Activated CD4-positive, alpha-beta memory T cell treated with anti-CD3 and anti-CD28 coated beads, Interleukin-2, amount 10 ng/mL, durations not matched to agents 7 days and 5 days (primary cell): ENCODE measurements at regions of chr14 and their contacts with region 1.

Region 1: DNA sequence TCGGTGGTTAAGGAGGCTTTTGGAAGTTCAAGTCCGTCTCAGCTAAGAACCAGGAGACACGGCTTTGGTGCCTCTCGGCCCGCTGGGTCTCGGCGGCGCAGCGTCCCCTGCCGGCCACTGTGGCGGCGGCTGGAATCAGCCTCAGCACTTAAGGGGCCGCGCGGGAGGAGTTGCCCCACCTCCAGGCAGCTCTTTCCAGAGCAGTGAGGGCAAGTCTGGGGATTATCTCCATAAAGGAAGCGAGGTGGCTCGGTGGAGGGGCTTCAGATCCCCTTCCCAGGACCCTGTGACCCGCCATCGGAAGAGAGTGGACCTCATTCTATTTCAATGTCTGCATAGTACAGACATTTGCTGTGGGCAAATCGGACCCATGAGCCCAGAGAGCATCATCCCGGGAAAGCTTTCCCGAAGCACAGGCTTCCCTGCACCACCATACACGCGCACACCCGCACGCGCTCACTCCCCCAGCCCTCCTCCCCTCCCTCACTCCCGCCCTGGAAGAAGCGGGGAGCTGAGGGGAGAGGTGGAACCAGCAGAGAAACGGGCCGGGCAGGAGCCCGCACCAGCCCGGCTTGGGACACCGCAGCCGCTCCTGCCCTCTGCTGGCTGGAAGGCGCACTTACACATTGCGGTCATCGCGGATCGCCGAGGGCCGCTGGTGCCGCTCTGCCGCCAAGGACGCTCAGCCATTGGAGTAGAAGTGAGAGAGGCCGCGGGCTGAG is 15.9 kb downstream of the RNASE2 start:
- DNase-seq: peak; percentile 82
- H3K4me3 Mint-ChIP-seq: peak overlapping the region; percentile 81
- H3K27ac Mint-ChIP-seq: no peak overlapping the region
- H3K4me1 Mint-ChIP-seq: peaks cover 9% of the 10 kb centered on the region
- H3K27me3 Mint-ChIP-seq: peaks cover 41% of the 10 kb centered on the region

Region 2: DNA sequence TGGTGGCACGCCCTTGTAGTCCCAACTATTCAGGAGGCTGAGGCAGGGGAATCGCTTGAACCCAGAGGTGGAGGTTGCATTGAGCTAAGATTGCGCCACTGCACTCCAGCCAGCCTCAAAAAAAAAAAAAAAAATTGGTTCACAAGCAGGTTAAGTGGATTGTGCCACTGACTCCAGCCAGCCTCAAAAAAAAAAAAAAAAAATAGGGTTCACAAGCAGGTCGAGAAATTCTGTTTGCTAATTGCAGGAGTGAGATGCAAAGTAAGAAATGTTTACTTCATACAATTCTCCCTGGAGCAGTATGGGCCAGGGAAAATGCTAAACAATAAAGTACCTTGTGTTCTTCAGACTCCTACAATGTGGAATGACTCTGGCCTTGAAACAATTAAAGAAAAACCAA is 196.8 kb before region 1 on chr14:
- CTCF ChIA-PET with region 1: no interaction called
- POLR2A ChIA-PET with region 1: no interaction called
- DNase-seq: no peak
- H3K4me3 Mint-ChIP-seq: no peak overlapping the region
- H3K27ac Mint-ChIP-seq: no peak overlapping the region
- H3K4me1 Mint-ChIP-seq: no peaks in the 10 kb centered on the region
- H3K27me3 Mint-ChIP-seq: peaks cover 6% of the 10 kb centered on the region

Region 3: DNA sequence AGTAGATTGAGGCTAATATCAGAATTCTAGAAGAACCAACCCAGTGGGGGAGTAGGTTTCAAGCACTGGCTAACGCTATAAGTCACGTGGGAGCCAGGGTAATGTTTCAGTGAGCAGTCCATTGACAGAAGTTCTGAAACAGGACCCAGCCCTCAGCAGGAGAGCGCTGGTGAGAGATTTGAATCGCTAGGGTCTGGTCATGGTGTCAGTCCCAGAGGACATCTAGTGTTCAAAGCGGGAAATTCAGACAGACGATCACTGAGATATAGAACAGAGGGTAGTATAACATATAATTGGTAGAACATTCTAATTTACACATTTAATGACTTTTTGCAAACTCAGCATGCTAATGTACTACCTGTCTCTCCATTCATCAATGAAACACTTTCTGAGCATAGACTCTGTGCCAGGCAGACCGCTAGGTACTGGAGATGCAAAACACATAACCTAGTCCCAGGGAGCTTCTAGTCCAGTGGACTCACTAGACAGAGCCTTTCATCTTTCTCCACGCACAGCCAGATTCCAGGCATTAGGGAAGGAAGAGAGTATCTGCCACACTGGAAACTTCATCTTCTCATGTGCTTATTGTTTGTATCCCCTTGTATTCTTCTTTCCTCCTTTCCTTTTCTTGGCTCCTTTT is 115.4 kb before region 1 on chr14:
- CTCF ChIA-PET with region 1: interaction called, 73 read pairs
- POLR2A ChIA-PET with region 1: interaction called, 7 read pairs
- DNase-seq: peak; percentile 58
- H3K4me3 Mint-ChIP-seq: no peak overlapping the region
- H3K27ac Mint-ChIP-seq: no peak overlapping the region
- H3K4me1 Mint-ChIP-seq: no peaks in the 10 kb centered on the region
- H3K27me3 Mint-ChIP-seq: peaks cover 22% of the 10 kb centered on the region

Region 4: DNA sequence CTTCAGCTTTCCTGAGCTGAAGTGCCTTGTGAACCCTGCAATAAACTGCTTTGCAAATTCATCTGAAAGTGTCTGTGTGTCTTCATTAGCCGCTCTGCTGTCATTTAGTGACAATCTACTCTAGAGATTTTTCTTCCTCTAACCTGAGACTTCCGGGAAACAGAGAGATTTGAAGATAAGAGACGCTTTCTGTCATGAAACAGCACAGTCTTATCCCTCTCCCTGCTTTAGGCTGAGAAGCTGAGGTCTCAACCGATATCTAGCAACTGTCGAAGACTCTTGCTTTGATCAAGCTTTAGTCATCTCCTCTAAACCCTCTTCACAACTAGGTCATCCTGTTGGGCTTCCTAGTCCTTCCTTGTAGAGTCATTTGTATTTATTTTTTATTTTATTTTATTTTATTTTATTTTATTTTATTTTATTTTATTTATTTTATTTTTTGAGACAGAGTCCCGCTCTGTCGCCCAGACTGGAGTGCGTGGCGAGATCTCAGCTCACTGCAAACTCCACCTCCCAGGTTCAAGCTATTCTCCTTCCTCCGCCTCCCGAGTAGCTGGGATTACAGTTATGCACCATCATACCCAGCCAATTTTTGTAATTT is 14.7 kb before region 1 on chr14:
- CTCF ChIA-PET with region 1: interaction called, 79 read pairs
- POLR2A ChIA-PET with region 1: interaction called, 3 read pairs
- DNase-seq: no peak
- H3K4me3 Mint-ChIP-seq: no peak overlapping the region
- H3K27ac Mint-ChIP-seq: peak overlapping the region; percentile 44
- H3K4me1 Mint-ChIP-seq: peaks cover 40% of the 10 kb centered on the region
- H3K27me3 Mint-ChIP-seq: peaks cover 17% of the 10 kb centered on the region

Region 5: DNA sequence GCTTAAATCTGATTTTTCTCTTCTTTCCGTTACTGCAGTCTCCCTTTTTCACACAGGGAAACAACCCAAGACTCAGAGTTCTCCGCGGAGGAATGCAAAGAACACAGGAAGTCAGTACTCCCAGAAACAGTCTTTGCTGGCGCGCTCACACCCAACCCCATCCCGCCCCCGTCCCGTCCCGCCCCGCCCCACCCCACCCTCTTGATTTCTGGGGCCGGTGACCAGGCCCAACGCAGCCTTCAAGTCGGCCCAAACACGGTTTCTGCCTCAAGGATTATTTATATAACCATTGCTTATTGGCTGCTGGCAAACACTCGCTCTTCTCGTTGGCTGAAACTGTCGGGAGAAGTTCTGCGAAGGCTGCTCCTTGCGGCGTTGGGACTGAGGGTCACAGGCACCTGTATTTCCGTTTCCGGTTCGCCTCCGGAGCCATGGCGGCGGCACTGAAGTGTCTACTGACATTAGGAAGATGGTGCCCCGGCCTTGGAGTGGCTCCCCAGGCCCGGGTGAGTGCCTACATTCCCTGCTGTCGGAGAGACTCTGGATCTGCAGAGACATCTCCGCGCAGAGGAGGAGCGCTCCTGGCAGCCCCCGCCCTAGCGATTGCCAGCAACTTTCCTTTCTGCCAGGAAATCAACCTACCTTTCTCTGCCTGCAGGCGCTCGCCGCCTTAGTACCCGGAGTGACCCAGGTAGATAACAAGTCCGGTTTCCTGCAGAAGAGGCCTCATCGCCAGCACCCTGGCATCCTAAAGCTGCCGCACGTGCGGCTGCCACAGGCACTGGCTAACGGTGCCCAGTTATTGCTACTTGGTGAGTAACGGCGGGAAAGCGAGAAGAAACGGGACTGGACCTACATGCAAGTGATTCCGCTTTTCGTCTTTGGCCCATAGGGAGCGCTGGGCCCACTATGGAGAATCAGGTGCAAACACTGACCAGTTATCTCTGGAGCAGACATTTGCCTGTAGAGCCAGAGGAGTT is 18.7 kb after region 1 on chr14 and contains the start of gene METTL17:
- CTCF ChIA-PET with region 1: interaction called, 14 read pairs
- POLR2A ChIA-PET with region 1: interaction called, 3 read pairs
- DNase-seq: peak; percentile 90
- H3K4me3 Mint-ChIP-seq: peak within 1 kb of the TSS; percentile 93
- H3K27ac Mint-ChIP-seq: peak within 1 kb of the TSS; percentile 81
- H3K4me1 Mint-ChIP-seq: peaks cover 56% of the 10 kb centered on the region
- H3K27me3 Mint-ChIP-seq: no peaks in the 10 kb centered on the region
- total RNA-seq, gene METTL17: 81.9 to 82.0 TPM

Region 6: GRCh38 chr14:21103710-21104447 is 132.7 kb after region 1 on chr14:
- CTCF ChIA-PET with region 1: interaction called, 23 read pairs
- POLR2A ChIA-PET with region 1: no interaction called
- DNase-seq: peak; percentile 96
- H3K4me3 Mint-ChIP-seq: peak overlapping the region; percentile 88
- H3K27ac Mint-ChIP-seq: peak overlapping the region; percentile 78
- H3K4me1 Mint-ChIP-seq: peaks cover 50% of the 10 kb centered on the region
- H3K27me3 Mint-ChIP-seq: peaks cover 10% of the 10 kb centered on the region